Calu3 (cell line): ENCODE measurements at regions of chr11 and their contacts with region 1.

Region 1: DNA sequence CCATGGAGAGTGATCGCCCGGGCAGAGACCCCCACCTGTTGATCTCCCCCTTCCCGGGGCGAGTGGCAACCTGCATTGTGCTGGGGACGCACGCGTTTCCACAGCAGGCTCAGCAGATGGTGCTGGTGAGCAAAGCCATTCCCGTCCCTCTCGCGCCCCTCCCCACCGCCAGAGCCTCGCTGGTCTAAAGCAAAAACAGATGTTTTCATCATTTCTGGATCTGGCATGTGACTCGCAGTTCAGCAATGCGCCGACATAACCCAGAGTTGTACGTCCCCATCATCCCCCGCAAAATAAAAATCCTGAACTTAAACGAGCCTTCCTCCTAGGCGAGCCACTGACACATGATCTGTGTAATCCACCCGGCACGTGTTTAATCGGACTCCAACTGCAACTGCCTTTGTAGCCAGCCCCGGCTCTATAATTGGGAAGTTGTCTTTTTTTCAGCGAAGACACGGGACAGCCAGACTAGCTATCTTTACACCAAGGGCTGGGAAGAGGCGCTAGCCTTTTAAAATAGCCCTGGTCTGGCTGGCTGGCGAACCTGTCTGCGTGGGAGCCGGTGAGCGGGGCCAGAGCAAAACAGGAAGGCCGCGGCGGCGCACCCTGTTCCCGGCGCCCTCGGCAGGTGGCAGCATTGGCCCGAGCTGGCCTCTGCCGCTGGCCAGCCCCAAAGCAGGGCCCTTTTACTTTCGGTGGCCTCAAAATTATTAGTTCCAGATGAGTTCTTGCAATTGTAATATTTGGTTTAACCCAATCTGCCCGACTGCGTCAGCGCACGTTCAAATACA is 203.0 kb upstream of the SORL1-AS1 start:
- DNase-seq: peak; percentile 81
- H3K4me3 Mint-ChIP-seq: peak overlapping the region; percentile 72
- H3K27ac Mint-ChIP-seq: no peak overlapping the region
- H3K4me1 Mint-ChIP-seq: peaks cover 16% of the 10 kb centered on the region
- H3K27me3 Mint-ChIP-seq: peaks cover 61% of the 10 kb centered on the region
- CTCF ChIP-seq: peak; percentile 69

Region 2: GRCh38 chr11:121964591-121964990 is 308.9 kb after region 1 on chr11:
- CTCF ChIA-PET with region 1: no interaction called
- intact Hi-C with region 1: loop called (anchors 10 kb)
- DNase-seq: no peak
- H3K4me3 Mint-ChIP-seq: no peak overlapping the region
- H3K27ac Mint-ChIP-seq: no peak overlapping the region
- H3K4me1 Mint-ChIP-seq: no peaks in the 10 kb centered on the region
- H3K27me3 Mint-ChIP-seq: peaks cover 9% of the 10 kb centered on the region
- CTCF ChIP-seq: no peak

Region 3: GRCh38 chr11:122101625-122102291 is 446.0 kb after region 1 on chr11:
- CTCF ChIA-PET with region 1: no interaction called
- intact Hi-C with region 1: loop called (anchors 5 kb)
- DNase-seq: no peak
- H3K4me3 Mint-ChIP-seq: no peak overlapping the region
- H3K27ac Mint-ChIP-seq: no peak overlapping the region
- H3K4me1 Mint-ChIP-seq: peaks cover 6% of the 10 kb centered on the region
- H3K27me3 Mint-ChIP-seq: peaks cover 16% of the 10 kb centered on the region
- CTCF ChIP-seq: no peak

Region 4: GRCh38 chr11:122202951-122203456 is 547.3 kb after region 1 on chr11:
- CTCF ChIA-PET with region 1: interaction called, 4 read pairs
- intact Hi-C with region 1: loop called (anchors 2 kb)
- DNase-seq: peak; percentile 65
- H3K4me3 Mint-ChIP-seq: peak overlapping the region; percentile 46
- H3K27ac Mint-ChIP-seq: no peak overlapping the region
- H3K4me1 Mint-ChIP-seq: peaks cover 17% of the 10 kb centered on the region
- H3K27me3 Mint-ChIP-seq: peaks cover 61% of the 10 kb centered on the region
- CTCF ChIP-seq: peak; percentile 86

Region 5: GRCh38 chr11:122505304-122506006 is 849.7 kb after region 1 on chr11:
- CTCF ChIA-PET with region 1: no interaction called
- intact Hi-C with region 1: loop called (anchors 1 kb)
- DNase-seq: peak; percentile 70
- H3K4me3 Mint-ChIP-seq: no peak overlapping the region
- H3K27ac Mint-ChIP-seq: no peak overlapping the region
- H3K4me1 Mint-ChIP-seq: no peaks in the 10 kb centered on the region
- H3K27me3 Mint-ChIP-seq: peaks cover 59% of the 10 kb centered on the region
- CTCF ChIP-seq: peak; percentile 63